Brain microvascular endothelial cell (primary cell): ENCODE measurements at regions of chr2 and their contacts with region 1.

Region 1: DNA sequence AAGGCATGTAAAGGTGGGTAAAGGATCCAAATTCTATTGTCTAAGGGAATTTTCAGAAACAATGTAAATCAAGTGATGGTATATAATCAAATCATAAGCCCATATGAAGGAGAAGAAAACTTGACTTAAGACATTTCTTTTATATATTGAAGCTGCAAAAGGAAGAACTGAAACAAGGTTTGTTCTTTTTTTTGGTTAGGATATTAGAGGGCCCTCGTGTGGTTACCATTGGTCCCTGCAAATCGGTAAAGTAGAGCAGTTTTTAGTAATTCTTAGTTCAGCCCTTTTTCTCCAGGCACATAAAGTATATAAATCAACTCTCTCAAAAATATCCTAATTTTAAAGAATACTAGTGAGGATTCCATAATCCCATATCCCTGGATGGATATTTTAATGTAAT is 105.6 kb upstream of the STK17B start:
- DNase-seq: no peak
- H3K4me3 ChIP-seq: no peak overlapping the region
- H3K27ac ChIP-seq: peak overlapping the region; percentile 39
- H3K27me3 ChIP-seq: no peaks in the 10 kb centered on the region
- CTCF ChIP-seq: peak; percentile 68

Region 2: GRCh38 chr2:196088203-196088602 is 188.8 kb before region 1 on chr2:
- in situ Hi-C with region 1: loop called (anchors 25 kb)
- DNase-seq: peak; percentile 74
- H3K4me3 ChIP-seq: no peak overlapping the region
- H3K27ac ChIP-seq: no peak overlapping the region
- H3K27me3 ChIP-seq: no peaks in the 10 kb centered on the region
- CTCF ChIP-seq: no peak